Activated CD4-positive, alpha-beta memory T cell treated with anti-CD3 and anti-CD28 coated beads for 36 hours (primary cell): ENCODE measurements at regions of chr20 and their contacts with region 1.

Region 1: DNA sequence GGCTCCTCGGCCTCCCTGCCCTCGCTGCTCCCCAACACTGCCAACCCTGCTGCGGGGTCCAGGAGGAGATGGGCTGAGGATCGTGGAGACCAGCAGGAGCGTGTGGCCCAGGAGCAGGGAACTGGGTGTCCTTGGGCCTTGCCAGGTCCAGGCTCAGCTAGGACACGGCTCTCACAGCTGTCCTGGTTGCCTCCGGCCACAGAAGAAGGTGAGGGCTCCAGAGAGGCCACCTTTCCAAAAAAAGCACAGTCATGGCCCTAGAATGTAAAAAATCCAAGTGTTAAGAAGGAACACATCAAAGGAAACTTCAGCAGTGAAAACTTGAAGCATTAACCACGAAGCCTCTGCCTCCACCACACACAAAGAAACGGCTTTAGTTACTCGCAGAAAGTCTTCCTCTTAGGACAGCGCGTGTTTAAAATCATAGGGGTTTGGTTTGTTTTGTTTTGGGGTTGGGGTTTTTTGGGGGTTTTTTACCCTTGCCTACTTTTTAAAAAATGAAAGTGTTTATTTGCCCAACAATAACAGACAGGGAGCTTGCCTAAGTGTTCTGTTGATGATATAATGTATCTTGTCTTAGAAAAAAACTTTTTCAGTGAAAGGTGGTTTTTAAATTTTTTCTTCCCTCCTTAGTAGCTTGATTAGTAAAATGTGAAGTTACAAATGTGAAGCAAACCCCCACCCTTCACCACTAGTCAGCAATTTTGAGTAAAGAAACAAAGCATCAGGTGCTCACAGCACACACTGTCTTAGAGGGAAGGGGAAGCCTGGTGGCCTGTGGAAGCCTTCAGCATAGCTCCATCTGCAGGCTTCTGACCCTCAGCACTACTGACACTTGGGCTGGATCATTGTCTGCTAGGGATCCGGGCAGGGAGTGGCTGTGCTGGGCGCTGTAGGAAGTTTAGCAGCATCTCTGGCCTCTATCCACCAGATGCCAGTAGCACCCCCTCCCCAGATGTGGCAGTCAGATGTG is 60.0 kb downstream of the PTPN1 start:
- DNase-seq: peak; percentile 74
- H3K4me3 Mint-ChIP-seq: peak overlapping the region; percentile 24
- H3K27ac Mint-ChIP-seq: peak overlapping the region; percentile 61
- H3K4me1 Mint-ChIP-seq: peaks cover 82% of the 10 kb centered on the region
- H3K27me3 Mint-ChIP-seq: no peaks in the 10 kb centered on the region

Region 2: GRCh38 chr20:50189681-50190582 is 380.2 kb before region 1 on chr20:
- CTCF ChIA-PET with region 1: no interaction called
- POLR2A ChIA-PET with region 1: no interaction called
- intact Hi-C with region 1: loop called (anchors 5 kb)
- DNase-seq: peak; percentile 90
- H3K4me3 Mint-ChIP-seq: peak overlapping the region; percentile 20
- H3K27ac Mint-ChIP-seq: no peak overlapping the region
- H3K4me1 Mint-ChIP-seq: peaks cover 23% of the 10 kb centered on the region
- H3K27me3 Mint-ChIP-seq: peaks cover 9% of the 10 kb centered on the region

Region 3: DNA sequence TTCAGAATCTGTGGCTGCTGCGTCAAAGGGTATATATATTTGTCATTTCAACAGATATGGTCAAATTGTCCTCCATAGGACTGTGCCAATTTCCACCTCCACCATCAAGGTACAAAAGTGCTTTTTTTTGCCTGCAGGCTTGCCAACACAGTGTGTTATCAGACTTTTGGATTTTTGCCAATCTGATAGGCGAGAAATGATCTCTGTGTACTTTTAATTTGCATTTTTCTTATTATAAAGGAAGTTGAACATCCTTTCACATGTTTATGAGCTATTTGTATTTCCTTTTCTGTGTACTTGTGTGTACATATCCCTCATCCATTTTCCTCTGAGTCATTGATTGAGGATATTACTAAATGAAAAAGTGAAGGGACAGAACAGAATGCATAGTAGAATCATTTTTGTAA is 98.9 kb before region 1 on chr20:
- CTCF ChIA-PET with region 1: interaction called, 5 read pairs
- POLR2A ChIA-PET with region 1: no interaction called
- intact Hi-C with region 1: loop called (anchors 1 kb)
- DNase-seq: no peak
- H3K4me3 Mint-ChIP-seq: no peak overlapping the region
- H3K27ac Mint-ChIP-seq: no peak overlapping the region
- H3K4me1 Mint-ChIP-seq: peaks cover 34% of the 10 kb centered on the region
- H3K27me3 Mint-ChIP-seq: no peaks in the 10 kb centered on the region

Region 4: GRCh38 chr20:50484276-50484976 is 85.7 kb before region 1 on chr20:
- CTCF ChIA-PET with region 1: interaction called, 50 read pairs
- POLR2A ChIA-PET with region 1: interaction called, 4 read pairs
- intact Hi-C with region 1: loop called (anchors 1 kb)
- DNase-seq: no peak
- H3K4me3 Mint-ChIP-seq: peak overlapping the region; percentile 82
- H3K27ac Mint-ChIP-seq: peak overlapping the region; percentile 93
- H3K4me1 Mint-ChIP-seq: peaks cover 38% of the 10 kb centered on the region
- H3K27me3 Mint-ChIP-seq: no peaks in the 10 kb centered on the region

Region 5: DNA sequence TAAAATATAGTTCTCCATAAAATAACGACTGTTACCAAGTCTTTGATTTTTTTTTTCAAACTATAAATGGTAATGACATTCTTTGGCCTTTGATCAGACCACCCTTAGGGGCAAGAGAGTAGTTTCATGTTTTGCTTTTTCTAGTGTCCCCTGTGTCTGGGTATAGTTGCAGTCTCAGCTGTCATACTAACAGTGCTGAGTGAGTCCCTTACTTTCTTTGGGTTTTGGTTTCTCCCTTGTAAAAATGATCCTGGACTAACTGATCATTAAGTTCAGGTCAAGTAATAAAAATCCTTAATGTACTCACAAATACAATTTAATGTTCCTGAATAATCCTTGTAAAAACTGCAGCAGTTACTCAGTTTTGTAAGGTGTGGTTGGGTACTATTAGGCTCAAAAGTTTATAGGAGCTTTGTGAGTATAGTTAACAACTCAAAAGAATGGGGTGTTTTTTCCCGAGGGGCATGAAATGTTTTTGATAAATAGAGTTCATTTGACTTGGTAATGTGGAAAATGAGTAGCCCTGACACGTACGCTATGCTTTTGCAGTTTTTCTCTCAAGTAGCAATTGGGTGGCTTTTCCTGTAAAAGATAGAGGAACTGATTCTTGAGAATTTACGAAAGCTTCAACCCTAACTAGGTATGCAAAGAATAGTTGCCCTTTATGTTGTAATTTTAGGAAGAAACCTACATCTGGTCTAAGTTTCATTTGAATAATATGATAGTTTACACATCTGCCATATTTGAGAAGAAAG is 53.8 kb before region 1 on chr20:
- CTCF ChIA-PET with region 1: interaction called, 38 read pairs
- POLR2A ChIA-PET with region 1: interaction called, 6 read pairs
- intact Hi-C with region 1: loop called (anchors 1 kb)
- DNase-seq: no peak
- H3K4me3 Mint-ChIP-seq: peak overlapping the region; percentile 67
- H3K27ac Mint-ChIP-seq: peak overlapping the region; percentile 98
- H3K4me1 Mint-ChIP-seq: peaks cover 88% of the 10 kb centered on the region
- H3K27me3 Mint-ChIP-seq: no peaks in the 10 kb centered on the region

Region 6: GRCh38 chr20:51104960-51105920 is 535.1 kb after region 1 on chr20:
- CTCF ChIA-PET with region 1: no interaction called
- POLR2A ChIA-PET with region 1: no interaction called
- intact Hi-C with region 1: no loop called
- DNase-seq: no peak
- H3K4me3 Mint-ChIP-seq: no peak overlapping the region
- H3K27ac Mint-ChIP-seq: no peak overlapping the region
- H3K4me1 Mint-ChIP-seq: no peaks in the 10 kb centered on the region
- H3K27me3 Mint-ChIP-seq: peaks cover 5% of the 10 kb centered on the region